BJ (cell line): ENCODE measurements at regions of chr12 and their contacts with region 1.

Region 1: DNA sequence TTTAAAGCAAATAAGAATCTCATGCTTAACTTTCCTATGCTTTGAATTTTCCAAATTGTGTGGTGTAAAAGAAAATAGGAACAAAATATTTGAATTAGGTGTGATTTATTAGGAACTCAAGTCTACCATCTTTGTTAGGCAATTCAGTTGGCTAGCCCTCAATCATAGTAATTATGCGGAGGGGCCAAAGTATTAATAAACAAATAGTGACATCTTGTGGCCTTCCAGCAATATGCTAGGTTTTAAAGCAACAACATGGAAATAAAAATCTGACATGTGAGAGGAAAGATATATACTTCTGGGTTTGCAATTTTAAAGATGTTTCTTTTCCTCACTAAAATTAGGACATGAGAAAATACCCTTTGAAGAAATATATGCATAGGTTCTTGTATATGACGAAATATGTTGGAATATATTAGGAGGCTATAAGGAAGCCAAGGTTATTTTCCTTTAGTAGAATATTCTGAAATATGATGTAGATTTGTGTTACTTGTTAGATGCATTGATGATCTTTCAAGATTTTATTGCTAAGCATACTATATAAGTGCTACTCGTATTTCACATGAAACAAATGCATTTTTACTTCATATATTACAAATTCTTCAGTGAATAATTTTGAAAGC is 200.4 kb downstream of the PTPRO start:
- DNase-seq: no peak
- H3K4me3 ChIP-seq: no peak overlapping the region
- H3K27me3 ChIP-seq: peaks cover 6% of the 10 kb centered on the region
- CTCF ChIP-seq: peak; percentile 50

Region 2: GRCh38 chr12:15276088-15276698 is 246.5 kb before region 1 on chr12:
- CTCF ChIA-PET with region 1: interaction called, 51 read pairs
- POLR2A ChIA-PET with region 1: no interaction called
- DNase-seq: no peak
- H3K4me3 ChIP-seq: no peak overlapping the region
- H3K27me3 ChIP-seq: no peaks in the 10 kb centered on the region; the same call in 1 of the 2 replicates
- CTCF ChIP-seq: peak; percentile 60